ENCODE measurements at regions of chr10 and their contacts with region 1.

Region 1: DNA sequence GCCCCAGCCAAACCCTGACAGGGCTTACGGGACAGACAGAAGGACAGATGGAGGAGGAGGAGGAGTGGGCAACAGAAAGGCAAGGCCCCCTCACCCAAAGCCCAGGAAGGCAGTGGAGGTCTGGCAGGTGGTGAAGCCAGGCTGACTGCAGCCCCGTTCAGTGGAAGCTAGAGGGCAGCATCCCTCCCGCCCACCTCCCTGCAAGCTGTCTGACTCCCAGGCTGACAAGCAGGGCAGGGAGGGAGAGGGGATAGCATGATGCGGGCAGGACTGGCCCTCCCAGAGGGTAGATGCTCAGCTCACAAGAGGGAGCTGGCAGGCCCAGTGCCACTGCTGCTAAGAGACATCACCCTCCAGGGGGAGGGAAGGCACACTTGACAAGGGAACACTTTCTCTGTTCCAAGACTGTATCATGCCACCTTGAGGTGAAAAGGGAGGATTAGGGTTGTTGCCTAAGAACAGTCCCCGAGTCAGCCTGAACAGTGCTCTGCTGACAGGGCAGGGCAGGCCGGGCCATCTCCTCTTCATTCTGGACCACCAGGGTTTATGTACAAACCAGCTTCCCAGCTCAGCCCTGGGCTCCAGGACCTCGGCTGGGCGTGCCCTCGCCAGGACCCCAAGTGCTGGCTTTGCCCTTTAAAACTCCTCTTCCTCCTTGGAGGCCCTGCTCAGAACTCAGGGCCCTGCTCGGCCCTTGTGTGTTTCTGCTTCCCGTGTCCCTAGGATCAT is 61.8 kb downstream of the RASGEF1A start:
- DNase-seq: peak; percentile 83
- CTCF ChIP-seq: peak; percentile 90

Region 2: GRCh38 chr10:43193496-43194080 is 11.5 kb before region 1 on chr10:
- CTCF ChIA-PET with region 1: interaction called, 33 read pairs
- POLR2A ChIA-PET with region 1: no interaction called
- DNase-seq: no peak
- CTCF ChIP-seq: no peak

Region 3: DNA sequence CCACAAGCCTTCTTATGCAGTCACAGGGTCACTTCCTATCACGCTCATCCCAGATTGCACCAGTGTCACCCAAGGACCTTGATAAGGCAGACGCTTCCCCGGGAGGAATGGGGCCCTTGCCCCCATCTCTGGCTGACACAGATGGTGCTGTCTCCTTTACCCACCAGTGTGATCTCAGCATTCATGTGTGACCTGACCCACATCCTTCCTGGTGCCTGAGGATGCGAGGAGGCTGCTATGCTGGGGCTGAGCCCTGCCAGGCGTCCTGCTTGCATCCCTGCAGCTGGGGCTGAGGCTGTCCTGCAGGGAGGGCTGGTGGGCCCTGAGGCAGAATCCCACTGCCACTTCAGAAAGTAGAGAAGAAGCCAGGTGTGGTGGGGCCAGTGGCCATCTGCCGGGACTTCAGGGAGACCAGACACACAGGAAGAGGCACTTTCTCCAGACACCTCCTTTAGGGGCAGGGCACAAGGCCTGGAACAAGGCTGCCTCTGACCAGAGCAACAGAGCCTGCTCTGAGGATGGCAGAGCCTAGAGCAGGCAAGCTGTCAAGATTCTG is 26.5 kb after region 1 on chr10:
- CTCF ChIA-PET with region 1: no interaction called
- POLR2A ChIA-PET with region 1: no interaction called
- DNase-seq: no peak
- CTCF ChIP-seq: no peak

Measured in GM10248 (cell line).